ENCODE measurements at regions of chr1 and their contacts with region 1.

Region 1: DNA sequence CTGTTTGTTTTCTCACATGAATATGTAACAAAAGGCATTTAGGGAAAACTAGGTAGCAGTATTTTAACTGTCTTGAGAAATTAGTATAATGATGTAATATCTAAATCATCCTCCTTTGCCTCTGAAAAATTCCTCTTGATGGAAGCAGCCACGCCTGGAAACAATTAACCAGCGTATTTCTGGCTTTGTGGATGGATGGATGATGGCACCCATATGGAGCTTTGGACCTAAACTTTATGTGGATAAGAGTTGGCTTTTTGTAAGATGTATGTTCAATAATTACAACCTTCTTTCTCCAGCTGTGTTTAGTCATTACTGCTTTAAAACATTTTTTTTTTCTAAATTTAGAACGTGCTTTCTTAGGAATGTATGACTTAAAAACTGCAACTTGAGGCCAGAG is 12.7 kb downstream of the CDCA8 start:
- DNase-seq: no peak
- H3K4me3 ChIP-seq: no peak overlapping the region
- H3K27ac ChIP-seq: no peak overlapping the region
- H3K4me1 ChIP-seq: no peaks in the 10 kb centered on the region
- H3K27me3 ChIP-seq: no peaks in the 10 kb centered on the region
- CTCF ChIP-seq: no peak

Region 2: DNA sequence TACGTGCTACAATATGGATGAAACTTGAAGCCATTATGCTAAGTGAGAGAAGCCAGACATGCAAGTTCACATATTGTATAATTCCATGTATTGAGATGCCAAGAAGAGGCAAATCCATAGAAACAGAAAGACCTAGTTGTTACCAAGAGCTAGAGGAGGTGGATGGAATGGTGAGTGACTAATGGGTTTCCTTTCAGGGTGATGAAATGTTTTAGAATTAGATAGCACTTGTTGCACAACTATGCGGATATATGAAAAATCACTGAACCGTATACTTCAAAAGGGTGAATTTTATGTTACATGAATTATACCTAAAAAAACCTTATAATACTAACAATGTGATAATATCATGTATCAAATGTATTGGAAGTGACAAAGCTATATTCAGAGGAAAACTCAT is 41.8 kb after region 1 on chr1:
- intact Hi-C with region 1: no loop called
- DNase-seq: no peak
- H3K4me3 ChIP-seq: no peak overlapping the region
- H3K27ac ChIP-seq: no peak overlapping the region
- H3K4me1 ChIP-seq: no peaks in the 10 kb centered on the region
- H3K27me3 ChIP-seq: no peaks in the 10 kb centered on the region
- CTCF ChIP-seq: no peak

Region 3: DNA sequence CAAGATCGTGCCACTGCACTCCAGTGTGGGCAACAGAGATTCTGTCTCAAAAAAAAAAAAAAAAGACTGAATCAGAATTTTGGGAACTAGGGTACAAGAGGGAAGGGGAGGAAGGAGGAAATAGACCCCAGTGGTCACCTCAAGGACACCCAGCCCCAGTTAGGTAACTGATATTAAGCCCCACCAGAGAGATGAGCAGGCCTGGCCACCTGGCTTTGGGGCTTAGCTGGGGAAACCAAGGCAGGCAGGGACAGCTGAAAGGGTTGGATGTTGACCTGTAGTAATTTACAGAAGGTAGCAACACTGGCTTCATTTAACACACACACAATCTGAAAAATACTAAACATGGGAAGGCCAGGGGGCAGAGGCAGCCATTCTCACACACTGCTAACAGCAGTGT is 97.5 kb after region 1 on chr1:
- intact Hi-C with region 1: loop called (anchors 5 kb)
- DNase-seq: no peak
- H3K4me3 ChIP-seq: no peak overlapping the region
- H3K27ac ChIP-seq: no peak overlapping the region
- H3K4me1 ChIP-seq: peaks cover 7% of the 10 kb centered on the region
- H3K27me3 ChIP-seq: no peaks in the 10 kb centered on the region
- CTCF ChIP-seq: no peak